HEK293 (cell line): ENCODE measurements at regions of chr9 and their contacts with region 1.

Region 1: DNA sequence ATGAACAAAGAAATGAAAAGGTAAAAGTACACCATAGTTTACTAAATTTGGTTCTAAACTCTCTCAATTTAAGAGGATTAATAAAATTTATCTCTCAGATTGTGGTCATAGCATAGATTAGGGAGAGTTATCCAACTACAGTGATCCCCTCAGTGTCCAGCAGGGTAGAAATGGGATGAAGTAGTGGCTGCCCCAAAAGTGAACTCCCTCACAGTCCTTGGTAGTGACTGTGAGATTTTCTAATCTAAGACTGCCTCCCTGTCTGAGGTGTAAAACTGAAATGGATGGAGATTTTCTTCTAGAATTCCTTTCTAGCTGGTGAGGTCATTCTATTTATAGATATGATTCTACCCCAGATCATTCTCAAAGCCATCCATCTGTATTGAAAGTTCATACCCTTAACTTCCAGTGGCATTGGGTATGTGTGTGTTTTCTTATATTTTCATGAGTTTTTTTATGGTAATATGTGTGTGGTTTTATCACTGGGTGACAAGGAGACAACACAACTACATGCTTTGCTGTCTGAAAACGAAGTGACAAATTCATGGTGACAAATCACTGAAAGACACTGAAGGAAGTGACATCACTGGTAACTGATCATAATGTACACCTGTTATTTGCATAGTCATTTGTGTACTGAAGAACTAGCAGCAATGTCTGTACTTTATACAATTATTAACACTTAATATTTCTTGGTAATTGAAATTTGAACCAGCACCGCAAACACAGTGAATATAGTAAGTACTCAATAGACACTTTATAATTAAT is 455.3 kb downstream of the ACTL7B start:
- H3K4me3 ChIP-seq: no peak overlapping the region
- H3K27ac ChIP-seq: no peak overlapping the region
- H3K4me1 ChIP-seq: no peaks in the 10 kb centered on the region
- CTCF ChIP-seq: no peak

Region 2: GRCh38 chr9:108412755-108413154 is 12.3 kb after region 1 on chr9:
- CTCF ChIA-PET with region 1: interaction called, 14 read pairs
- POLR2A ChIA-PET with region 1: no interaction called
- H3K4me3 ChIP-seq: no peak overlapping the region
- H3K27ac ChIP-seq: no peak overlapping the region
- H3K4me1 ChIP-seq: no peaks in the 10 kb centered on the region; the same call in 1 of the 2 replicates
- CTCF ChIP-seq: no peak